ENCODE measurements at regions of chr3 and their contacts with region 1.

Region 1: DNA sequence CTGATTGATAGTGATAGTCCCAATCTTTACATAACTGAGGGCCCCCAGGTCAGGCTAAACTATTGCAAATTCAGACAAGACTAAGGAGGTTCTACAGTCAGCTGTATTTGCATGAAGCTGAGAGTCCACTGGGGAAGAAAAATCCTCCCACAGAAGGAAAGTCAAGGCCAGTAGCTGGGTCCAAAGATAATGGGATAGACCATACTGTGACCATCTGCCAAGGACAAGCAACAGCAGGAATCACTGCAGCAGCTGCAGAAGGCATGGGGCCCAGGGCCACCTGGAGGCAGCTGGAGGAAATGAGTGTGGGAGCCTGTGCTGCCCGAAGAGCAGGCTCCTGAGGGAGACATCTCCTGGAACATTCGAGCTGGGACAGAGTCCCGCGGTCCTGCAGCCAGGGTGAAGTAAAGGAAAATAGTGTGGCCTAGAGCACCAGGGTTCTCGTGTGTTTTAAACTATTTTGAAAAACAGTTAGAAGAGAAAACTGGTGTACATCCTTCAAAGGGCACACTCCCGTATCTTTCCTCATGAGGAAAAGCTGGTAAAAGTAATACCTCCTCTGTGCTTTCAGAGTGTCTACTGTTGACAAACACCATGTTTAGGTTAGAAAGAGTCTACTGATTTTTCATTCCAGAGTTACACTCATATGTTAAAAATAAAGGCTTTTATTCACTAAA is 13.2 kb upstream of the TMEM212 start:
- DNase-seq: peak; percentile 87 to 91 (median 90)
- H3K4me3 ChIP-seq: no peak overlapping the region
- H3K27ac ChIP-seq: peak overlapping the region; percentile 31 to 84
- H3K4me1 ChIP-seq: peaks cover 19% of the 10 kb centered on the region
- H3K27me3 ChIP-seq: no peaks in the 10 kb centered on the region
- CTCF ChIP-seq: peak; percentile 42 to 83 (median 83)
- EP300 ChIP-seq: no peak
- POLR2A ChIP-seq: peak; percentile 23

Region 2: GRCh38 chr3:171654809-171655208 is 175.2 kb before region 1 on chr3:
- intact Hi-C with region 1: loop called in 1 of 4 experiments (anchors 10 kb)
- DNase-seq: peak; percentile 55 to 79 (median 59)
- H3K4me3 ChIP-seq: no peak overlapping the region
- H3K27ac ChIP-seq: no peak overlapping the region
- H3K4me1 ChIP-seq: peaks cover 6% of the 10 kb centered on the region
- H3K27me3 ChIP-seq: no peaks in the 10 kb centered on the region
- CTCF ChIP-seq: no peak
- EP300 ChIP-seq: no peak
- POLR2A ChIP-seq: no peak

Region 3: DNA sequence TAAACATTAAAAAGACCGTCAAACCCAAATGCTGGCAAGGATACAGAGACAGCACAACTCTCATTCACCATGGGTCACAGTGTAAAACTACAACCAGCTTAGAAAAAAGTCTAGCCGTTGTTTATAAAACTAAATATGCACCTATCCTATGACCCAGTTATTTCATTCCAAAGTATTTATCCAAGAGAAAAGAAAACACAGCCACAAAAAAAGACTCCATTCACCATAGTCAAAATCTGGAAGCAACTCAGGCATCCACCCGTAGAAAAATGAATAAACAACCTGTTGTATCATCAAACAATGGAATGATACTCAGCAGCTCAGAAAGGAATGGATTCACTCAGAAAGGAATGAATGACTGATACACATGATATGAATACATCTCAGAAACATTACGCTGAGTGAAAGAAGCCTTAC is 48.3 kb before region 1 on chr3:
- intact Hi-C with region 1: loop called in 1 of 4 experiments (anchors 2 kb)
- DNase-seq: no peak
- H3K4me3 ChIP-seq: no peak overlapping the region
- H3K27ac ChIP-seq: no peak overlapping the region
- H3K4me1 ChIP-seq: peaks cover 5% of the 10 kb centered on the region
- H3K27me3 ChIP-seq: no peaks in the 10 kb centered on the region
- CTCF ChIP-seq: no peak
- EP300 ChIP-seq: no peak
- POLR2A ChIP-seq: no peak

Region 4: DNA sequence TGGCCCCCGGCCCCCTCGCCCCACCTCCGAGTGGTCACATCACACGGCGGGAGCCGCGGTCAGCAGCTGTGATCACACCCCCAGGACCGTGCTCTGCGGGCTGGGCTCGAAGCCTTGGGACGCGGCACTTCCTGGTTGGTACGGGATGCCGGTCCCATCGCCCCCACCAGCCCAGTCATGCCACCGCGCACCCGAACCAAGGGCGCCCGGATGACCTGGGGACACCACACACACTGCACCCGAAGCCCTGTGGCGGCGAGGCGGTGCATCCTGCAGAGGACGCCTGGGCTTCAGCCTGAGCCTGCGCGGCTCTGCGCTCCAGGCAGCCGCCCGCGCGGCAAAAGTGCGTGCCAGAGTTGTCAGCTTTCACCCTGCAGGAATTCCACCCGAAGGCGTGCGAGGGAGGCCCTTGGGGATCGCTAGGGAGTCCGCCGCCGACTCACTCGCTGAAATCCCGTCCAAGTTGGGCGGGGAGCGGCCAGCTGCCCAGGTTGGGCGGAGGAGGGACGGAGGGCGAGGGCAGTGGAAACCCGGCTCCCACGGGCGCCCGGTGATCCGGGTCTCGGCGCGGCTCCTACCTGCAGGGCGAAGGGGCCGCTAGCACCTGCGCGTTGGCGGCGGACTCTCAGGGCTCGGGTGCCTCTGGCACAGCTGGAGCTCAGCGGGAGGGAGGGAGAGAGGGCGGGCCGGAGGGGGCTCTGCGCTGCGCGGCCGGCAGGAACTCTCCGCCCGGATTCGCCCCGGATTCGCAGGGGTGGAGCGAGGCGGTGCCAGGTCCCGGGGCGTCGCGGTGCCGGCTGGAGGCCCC is 20.0 kb before region 1 on chr3 and contains the start of gene PLD1:
- intact Hi-C with region 1: loop called in 1 of 4 experiments (anchors 2 kb)
- DNase-seq: peak; percentile 88 to 93 (median 90)
- H3K4me3 ChIP-seq: peak within 1 kb of the TSS; percentile 68
- H3K27ac ChIP-seq: peak within 1 kb of the TSS; percentile 70 to 94
- H3K4me1 ChIP-seq: peaks cover 14% of the 10 kb centered on the region
- H3K27me3 ChIP-seq: no peaks in the 10 kb centered on the region
- CTCF ChIP-seq: peak in 1 of 3 donors; percentile 28
- EP300 ChIP-seq: peak; percentile 38
- POLR2A ChIP-seq: peak; percentile 58
- total RNA-seq, gene PLD1: 26.1 to 125 (median 55.2) TPM

Region 5: GRCh38 chr3:172332256-172333041 is 502.5 kb after region 1 on chr3:
- intact Hi-C with region 1: loop called in 1 of 4 experiments (anchors 10 kb)
- DNase-seq: peak in 4 of 5 donors; percentile 49 to 81 (median 69)
- H3K4me3 ChIP-seq: no peak overlapping the region
- H3K27ac ChIP-seq: peak overlapping the region in 1 of 2 donors; percentile 26
- H3K4me1 ChIP-seq: peaks cover 3% of the 10 kb centered on the region
- H3K27me3 ChIP-seq: no peaks in the 10 kb centered on the region
- CTCF ChIP-seq: peak; percentile 67 to 88 (median 83)
- EP300 ChIP-seq: no peak
- POLR2A ChIP-seq: no peak